Activated naive CD4-positive, alpha-beta T cell treated with anti-CD3 and anti-CD28 coated beads for 36 hours (primary cell): ENCODE measurements at regions of chr1 and their contacts with region 1.

Region 1: DNA sequence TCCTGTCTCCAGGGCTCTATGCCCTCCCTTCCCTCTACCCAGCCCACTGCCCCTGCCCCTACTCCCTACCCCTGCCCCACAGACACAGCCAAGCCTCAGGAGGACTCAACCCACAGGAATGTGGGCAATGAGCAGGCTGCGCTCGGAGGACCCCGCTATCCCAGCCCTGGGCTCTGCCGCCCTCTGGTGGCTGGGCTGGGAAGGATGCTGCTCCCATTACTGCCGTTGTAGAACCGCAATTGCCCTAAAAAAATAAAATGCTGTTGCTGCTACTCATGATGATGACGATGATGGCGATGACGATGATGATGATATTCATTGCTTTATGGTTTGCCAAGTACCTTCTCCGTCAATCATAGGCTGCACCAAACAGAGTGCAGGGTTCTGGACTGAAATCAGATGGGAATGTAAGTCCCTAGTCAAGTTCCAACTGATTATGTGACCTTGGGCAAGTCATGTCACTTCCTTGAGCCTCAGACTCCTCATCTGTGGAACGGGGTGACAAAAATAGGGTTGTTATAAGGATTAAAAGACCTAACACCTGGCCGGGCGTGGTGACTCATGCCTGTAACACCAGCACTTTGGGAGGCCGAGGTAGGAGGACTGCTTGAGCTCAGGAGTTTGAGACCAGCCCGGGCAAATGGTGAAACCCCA is 24.6 kb downstream of the ARHGEF19 start:
- DNase-seq: peak; percentile 81
- H3K4me3 Mint-ChIP-seq: no peak overlapping the region
- H3K27ac Mint-ChIP-seq: no peak overlapping the region
- H3K4me1 Mint-ChIP-seq: no peaks in the 10 kb centered on the region
- H3K27me3 Mint-ChIP-seq: no peaks in the 10 kb centered on the region

Region 2: GRCh38 chr1:15803354-15803753 is 384.5 kb before region 1 on chr1:
- CTCF ChIA-PET with region 1: no interaction called
- intact Hi-C with region 1: loop called (anchors 10 kb)
- DNase-seq: peak; percentile 32
- H3K4me3 Mint-ChIP-seq: no peak overlapping the region
- H3K27ac Mint-ChIP-seq: no peak overlapping the region
- H3K4me1 Mint-ChIP-seq: no peaks in the 10 kb centered on the region
- H3K27me3 Mint-ChIP-seq: no peaks in the 10 kb centered on the region

Region 3: DNA sequence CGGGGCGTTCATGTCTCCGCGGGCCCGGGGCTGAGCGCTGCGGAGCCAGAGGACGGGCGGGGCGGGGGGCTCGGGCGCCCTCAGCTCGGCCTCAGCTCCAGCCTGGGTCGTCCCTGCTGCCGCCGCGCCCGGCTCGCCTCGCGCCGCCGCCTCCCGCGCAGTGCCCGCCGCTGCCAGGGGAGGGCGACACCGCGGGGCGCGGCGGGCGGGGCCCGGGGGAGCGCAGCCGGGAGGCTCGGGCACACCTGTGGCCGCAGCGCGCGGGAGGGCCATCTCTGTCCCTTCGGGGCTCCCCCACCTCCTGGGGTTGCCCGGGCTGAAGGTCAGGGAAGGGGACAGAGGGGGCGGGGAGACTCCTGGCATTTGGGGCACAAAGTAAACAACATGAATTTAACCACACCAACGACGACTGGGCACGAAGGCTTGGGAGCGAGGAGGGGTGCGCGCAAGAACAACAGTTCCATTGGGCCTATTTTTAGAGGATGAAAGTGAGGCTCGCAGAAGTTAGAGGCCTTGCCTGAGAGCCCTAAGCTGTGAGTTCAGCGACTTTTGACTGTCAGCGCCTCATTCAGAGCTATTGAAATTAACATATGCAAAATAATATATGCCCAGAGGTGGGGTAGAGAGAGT is 114.3 kb before region 1 on chr1 and contains the start of gene FAM131C:
- CTCF ChIA-PET with region 1: interaction called, 243 read pairs
- intact Hi-C with region 1: no loop called
- DNase-seq: peak; percentile 36
- H3K4me3 Mint-ChIP-seq: peak within 1 kb of the TSS; percentile 48
- H3K27ac Mint-ChIP-seq: no peak within 1 kb of the TSS
- H3K4me1 Mint-ChIP-seq: peaks cover 7% of the 10 kb centered on the region
- H3K27me3 Mint-ChIP-seq: peaks cover 14% of the 10 kb centered on the region
- total RNA-seq, gene FAM131C: not detected

Region 4: DNA sequence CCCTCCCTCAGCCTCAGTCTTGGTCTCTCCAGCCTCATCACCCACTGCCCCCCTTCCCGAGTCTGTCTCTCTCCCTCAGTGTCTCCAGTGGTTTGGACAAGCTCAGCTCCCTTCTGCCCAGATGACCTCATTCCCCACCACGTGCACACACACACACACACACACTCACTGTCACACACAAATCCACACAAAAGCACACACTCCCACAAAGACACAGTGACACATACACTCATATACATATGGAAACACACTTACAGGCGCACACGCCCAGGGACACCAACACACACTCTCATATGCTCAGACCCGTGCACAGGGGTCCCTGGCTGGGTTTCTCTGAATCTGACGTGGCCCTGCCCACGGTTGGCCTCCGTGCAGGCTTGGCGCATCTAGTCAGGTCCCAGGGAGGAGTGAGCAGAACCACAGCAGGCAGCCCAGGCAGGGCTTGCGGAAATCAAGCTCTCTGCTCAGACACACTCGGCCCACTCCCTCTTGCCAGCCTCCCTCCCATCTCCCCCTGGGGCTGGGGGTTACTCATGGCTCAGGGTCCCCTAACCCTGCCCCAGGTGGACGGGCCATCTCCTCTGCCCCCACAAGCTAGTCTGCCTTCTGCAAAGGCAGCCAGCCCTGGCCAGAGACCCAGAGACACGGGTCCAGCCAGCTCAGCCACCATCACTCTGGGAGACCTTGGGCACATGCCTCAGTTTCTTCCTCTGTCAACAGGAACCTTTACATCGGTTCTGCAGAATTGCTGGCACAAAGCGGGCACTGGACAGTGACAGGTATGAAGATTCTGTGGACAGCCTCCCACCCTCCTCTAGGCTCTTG is 75.9 kb before region 1 on chr1:
- CTCF ChIA-PET with region 1: no interaction called
- intact Hi-C with region 1: no loop called
- DNase-seq: no peak
- H3K4me3 Mint-ChIP-seq: no peak overlapping the region
- H3K27ac Mint-ChIP-seq: no peak overlapping the region
- H3K4me1 Mint-ChIP-seq: no peaks in the 10 kb centered on the region
- H3K27me3 Mint-ChIP-seq: peaks cover 6% of the 10 kb centered on the region

Region 5: DNA sequence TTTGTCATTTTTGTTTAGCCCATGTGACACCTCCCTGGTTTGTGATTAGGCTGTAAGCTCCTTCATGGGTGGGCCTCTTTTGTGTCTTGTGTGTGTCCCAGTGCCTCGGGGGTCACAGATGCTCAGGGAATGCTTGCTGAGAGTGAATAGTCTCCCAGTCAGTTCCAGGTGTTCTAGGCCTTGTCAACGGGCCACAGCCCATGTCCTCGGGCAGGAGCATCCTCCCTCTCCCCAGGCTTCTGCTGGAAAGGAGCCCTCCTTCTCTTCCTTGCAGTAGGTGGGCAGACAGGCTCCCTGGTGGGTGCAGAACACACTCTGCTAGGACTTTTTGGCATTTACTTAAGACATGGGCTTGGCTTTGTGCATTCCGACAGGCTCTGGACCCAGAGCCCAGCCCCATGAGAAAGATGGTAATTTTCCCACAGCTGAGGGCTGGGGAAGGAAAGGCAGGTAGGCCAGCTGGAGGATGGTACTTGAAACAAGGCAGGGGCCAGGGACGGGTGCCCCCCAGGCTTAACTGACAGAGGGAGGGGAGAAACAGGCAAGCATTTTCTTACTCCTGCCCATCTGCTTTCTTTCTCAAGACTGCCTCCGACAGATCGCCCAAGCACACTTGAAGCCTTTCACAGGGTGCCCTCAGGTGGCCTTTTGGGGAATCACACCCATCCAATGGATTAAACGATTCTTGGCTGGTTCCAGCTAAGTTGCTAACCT is 56.2 kb after region 1 on chr1:
- CTCF ChIA-PET with region 1: interaction called, 6 read pairs
- intact Hi-C with region 1: loop called (anchors 1 kb)
- DNase-seq: peak; percentile 91
- H3K4me3 Mint-ChIP-seq: no peak overlapping the region
- H3K27ac Mint-ChIP-seq: no peak overlapping the region
- H3K4me1 Mint-ChIP-seq: peaks cover 10% of the 10 kb centered on the region
- H3K27me3 Mint-ChIP-seq: no peaks in the 10 kb centered on the region